Mammary epithelial cell (primary cell): ENCODE measurements at regions of chr3 and their contacts with region 1.

Region 1: GRCh38 chr3:176872771-176873209 is 324.5 kb downstream of the TBL1XR1 start:
- DNase-seq: peak; percentile 40
- H3K4me3 ChIP-seq: no peak overlapping the region
- H3K27ac ChIP-seq: no peak overlapping the region
- H3K4me1 ChIP-seq: no peaks in the 10 kb centered on the region
- H3K27me3 ChIP-seq: no peaks in the 10 kb centered on the region
- CTCF ChIP-seq: peak; percentile 88 to 90

Region 2: GRCh38 chr3:176590722-176591121 is 282.1 kb before region 1 on chr3:
- CTCF ChIA-PET with region 1: no interaction called
- dilution Hi-C with region 1: no loop called
- in situ Hi-C with region 1: no loop called
- intact Hi-C with region 1: no loop called
- DNase-seq: no peak
- H3K4me3 ChIP-seq: no peak overlapping the region
- H3K27ac ChIP-seq: no peak overlapping the region
- H3K4me1 ChIP-seq: no peaks in the 10 kb centered on the region
- H3K27me3 ChIP-seq: no peaks in the 10 kb centered on the region
- CTCF ChIP-seq: no peak

Region 3: DNA sequence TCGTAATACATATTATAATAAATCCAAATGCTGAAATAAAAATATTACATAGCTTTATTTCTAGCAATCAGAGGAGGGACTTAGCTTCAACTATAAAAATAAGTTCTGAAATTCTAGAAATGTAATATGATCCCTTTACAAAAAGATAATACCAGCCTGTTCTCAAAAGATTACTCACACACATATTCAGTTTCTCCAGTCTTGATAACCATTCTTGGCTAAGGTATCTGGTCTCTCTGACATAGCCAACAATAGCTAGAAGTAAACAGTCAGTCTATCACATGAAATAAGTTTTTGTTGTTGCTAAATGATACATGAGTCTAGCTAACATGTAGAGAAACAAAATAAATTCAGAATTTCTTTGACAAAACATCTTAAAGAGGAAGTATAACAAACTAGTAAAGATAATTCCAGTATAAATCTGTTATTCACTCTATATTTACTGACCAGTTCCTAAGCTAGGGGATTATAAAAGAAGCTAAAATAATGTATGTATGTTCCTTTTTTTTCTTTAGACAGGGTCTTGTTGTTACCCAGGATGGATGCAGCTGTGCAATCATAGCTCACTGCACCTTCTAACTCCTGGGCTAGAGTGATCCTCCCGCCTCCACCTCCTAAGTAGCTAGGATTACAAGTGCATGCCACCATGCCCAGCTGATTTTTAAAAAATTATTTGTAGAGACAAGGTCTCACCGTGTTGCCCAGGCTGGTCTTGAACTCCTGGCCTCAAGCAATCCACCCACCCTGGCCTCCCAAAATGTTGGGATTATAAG is 153.9 kb after region 1 on chr3:
- CTCF ChIA-PET with region 1: no interaction called
- dilution Hi-C with region 1: no loop called
- in situ Hi-C with region 1: no loop called
- intact Hi-C with region 1: loop called (anchors 10 kb)
- DNase-seq: peak; percentile 24
- H3K4me3 ChIP-seq: no peak overlapping the region
- H3K27ac ChIP-seq: no peak overlapping the region
- H3K4me1 ChIP-seq: no peaks in the 10 kb centered on the region
- H3K27me3 ChIP-seq: no peaks in the 10 kb centered on the region
- CTCF ChIP-seq: no peak